ENCODE measurements at regions of chrX and their contacts with region 1.

Region 1: GRCh38 chrX:9885150-9885549 is 82.0 kb upstream of the CLDN34 start:
- DNase-seq: peak; percentile 40 to 46
- ATAC-seq: peak; percentile 43 to 76 (median 64)
- H3K4me3 ChIP-seq: no peak overlapping the region
- H3K27ac ChIP-seq: no peak overlapping the region
- H3K4me1 ChIP-seq: peaks cover 0 to 21% (median 0%) of the 10 kb centered on the region in 9 donors
- H3K27me3 ChIP-seq: peaks cover 0 to 42% (median 0%) of the 10 kb centered on the region in 7 donors
- CTCF ChIP-seq: peak in 8 of 9 donors; percentile 13 to 68 (median 55)

Region 2: DNA sequence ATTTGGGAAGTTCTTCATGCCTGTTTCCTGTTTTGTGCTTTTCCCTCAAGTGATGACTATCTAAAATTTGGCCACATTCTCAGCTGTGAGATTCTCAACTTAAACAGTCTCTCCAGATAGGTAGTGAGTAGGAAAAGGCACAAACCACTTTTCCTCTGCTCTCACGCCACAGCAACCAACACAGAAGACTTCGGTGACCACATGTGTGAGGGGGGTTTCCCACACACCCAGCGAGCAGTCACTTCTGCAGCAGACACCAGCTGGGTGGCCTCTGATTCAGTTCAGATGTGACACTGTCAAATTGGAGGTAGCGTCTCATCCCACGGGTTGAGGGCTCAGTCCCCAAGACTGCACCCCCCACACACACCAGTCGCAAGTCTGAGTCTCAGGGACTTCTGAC is 56.9 kb after region 1 on chrX:
- intact Hi-C with region 1: no loop called
- DNase-seq: no peak
- ATAC-seq: no peak
- H3K4me3 ChIP-seq: no peak overlapping the region
- H3K27ac ChIP-seq: no peak overlapping the region
- H3K4me1 ChIP-seq: no peaks in the 10 kb centered on the region
- H3K27me3 ChIP-seq: peaks cover 0 to 18% (median 0%) of the 10 kb centered on the region in 7 donors
- CTCF ChIP-seq: no peak

Region 3: GRCh38 chrX:9988762-9989161 is 103.6 kb after region 1 on chrX:
- intact Hi-C with region 1: loop called in 7 of 10 experiments (anchors 5 to 10 kb)
- DNase-seq: no peak
- ATAC-seq: no peak
- H3K4me3 ChIP-seq: no peak overlapping the region
- H3K27ac ChIP-seq: no peak overlapping the region
- H3K4me1 ChIP-seq: peaks cover 0 to 8% (median 0%) of the 10 kb centered on the region in 9 donors
- H3K27me3 ChIP-seq: no peaks in the 10 kb centered on the region
- CTCF ChIP-seq: peak in 8 of 9 donors; percentile 7 to 51 (median 32)

Region 4: GRCh38 chrX:9995855-9996339 is 110.7 kb after region 1 on chrX:
- intact Hi-C with region 1: loop called in 4 of 10 experiments (anchors 5 to 10 kb)
- DNase-seq: peak; percentile 82 to 86
- ATAC-seq: peak; percentile 78 to 97 (median 93)
- H3K4me3 ChIP-seq: no peak overlapping the region
- H3K27ac ChIP-seq: no peak overlapping the region
- H3K4me1 ChIP-seq: peaks cover 0 to 4% (median 0%) of the 10 kb centered on the region in 9 donors
- H3K27me3 ChIP-seq: peaks cover 0 to 4% (median 0%) of the 10 kb centered on the region in 7 donors
- CTCF ChIP-seq: peak; percentile 84 to 97 (median 91)